ENCODE measurements at regions of chr10 and their contacts with region 1.

Region 1: GRCh38 chr10:79422178-79422892 is 23.1 kb downstream of the ZCCHC24 start:
- DNase-seq: no peak

Region 2: GRCh38 chr10:79286318-79286951 is 135.9 kb before region 1 on chr10:
- intact Hi-C with region 1: no loop called
- DNase-seq: peak; percentile 94

Region 3: GRCh38 chr10:79298403-79299244 is 123.7 kb before region 1 on chr10:
- intact Hi-C with region 1: no loop called
- DNase-seq: no peak

Region 4: DNA sequence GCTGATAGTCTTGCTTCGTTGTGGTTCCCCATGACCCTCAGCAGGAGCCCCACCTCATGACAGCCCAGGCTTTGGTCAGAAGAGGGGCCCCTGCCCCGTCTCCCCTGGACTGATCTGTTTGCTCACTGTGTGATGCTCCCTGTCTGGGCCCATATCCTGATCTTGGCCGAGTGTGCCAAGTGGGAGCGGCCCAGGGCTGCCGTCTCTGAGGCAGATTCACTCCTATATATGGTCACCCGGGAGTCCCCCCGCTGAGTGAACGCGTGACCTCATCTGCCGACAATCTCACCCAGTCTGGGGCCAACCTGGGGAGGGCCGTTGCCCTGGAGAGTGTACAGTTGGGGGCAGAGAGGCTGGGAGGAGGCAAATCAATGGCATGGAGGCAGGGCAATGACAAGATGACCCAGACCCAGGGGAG is 40.5 kb before region 1 on chr10:
- intact Hi-C with region 1: loop called (anchors 5 kb)
- DNase-seq: peak; percentile 88